HepG2 (cell line): ENCODE measurements at regions of chr13 and their contacts with region 1.

Region 1: DNA sequence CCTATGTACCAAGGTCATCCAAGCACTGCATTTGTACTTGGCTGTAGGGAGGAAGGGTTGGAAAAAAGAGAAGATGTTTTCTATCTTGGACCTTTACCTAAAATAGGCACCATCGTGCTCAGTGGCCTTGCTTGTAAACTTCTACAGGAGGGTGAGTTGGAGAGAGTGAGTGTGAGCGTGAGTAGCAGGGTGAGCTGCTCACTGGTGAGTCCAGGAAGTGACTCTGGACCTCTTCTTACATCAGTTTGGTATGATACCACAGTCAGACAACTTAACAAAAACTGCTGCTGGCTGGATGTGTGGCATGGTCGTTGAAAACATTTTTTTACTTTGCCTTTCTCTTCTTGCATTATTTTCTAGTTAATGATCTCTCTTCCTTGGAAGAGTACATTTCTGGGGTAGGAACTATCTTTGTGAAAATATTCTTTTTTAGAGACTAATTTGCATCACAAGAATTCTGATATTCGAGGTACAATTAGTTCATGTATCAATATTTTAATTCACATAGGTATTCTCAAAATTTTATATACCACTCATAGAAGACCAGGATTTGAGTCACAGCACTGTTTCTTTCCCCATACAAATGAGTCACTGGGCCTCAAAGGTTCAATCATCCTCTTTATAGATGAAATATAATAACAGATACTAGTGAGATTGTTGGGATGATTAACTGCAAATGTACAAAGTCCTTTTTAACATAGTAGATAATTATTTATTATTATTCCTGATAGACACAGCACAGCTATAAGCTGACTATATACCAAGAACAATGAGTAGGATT is 651 bp downstream of the SERPINE3 start:
- DNase-seq: no peak
- ATAC-seq: no peak
- H3K4me3 ChIP-seq: no peak overlapping the region
- H3K27ac ChIP-seq: no peak overlapping the region
- H3K4me1 ChIP-seq: peaks cover 8% of the 10 kb centered on the region; the same call in 1 of the 2 replicates
- H3K27me3 ChIP-seq: no peaks in the 10 kb centered on the region
- CTCF ChIP-seq: no peak
- EP300 ChIP-seq: no peak
- POLR2A ChIP-seq: no peak
- RAD21 ChIP-seq: no peak

Region 2: GRCh38 chr13:51303882-51304281 is 36.3 kb before region 1 on chr13:
- CTCF ChIA-PET with region 1: no interaction called
- POLR2A ChIA-PET with region 1: no interaction called
- in situ Hi-C with region 1: no loop called
- intact Hi-C with region 1: loop called (anchors 1 kb)
- DNase-seq: no peak
- ATAC-seq: no peak
- H3K4me3 ChIP-seq: no peak overlapping the region
- H3K27ac ChIP-seq: no peak overlapping the region
- H3K4me1 ChIP-seq: no peaks in the 10 kb centered on the region
- H3K27me3 ChIP-seq: peaks cover 0 to 18% of the 10 kb centered on the region in 2 experiments; a peak in 2 of 5 replicates
- CTCF ChIP-seq: no peak
- EP300 ChIP-seq: no peak
- POLR2A ChIP-seq: no peak
- RAD21 ChIP-seq: no peak

Region 3: DNA sequence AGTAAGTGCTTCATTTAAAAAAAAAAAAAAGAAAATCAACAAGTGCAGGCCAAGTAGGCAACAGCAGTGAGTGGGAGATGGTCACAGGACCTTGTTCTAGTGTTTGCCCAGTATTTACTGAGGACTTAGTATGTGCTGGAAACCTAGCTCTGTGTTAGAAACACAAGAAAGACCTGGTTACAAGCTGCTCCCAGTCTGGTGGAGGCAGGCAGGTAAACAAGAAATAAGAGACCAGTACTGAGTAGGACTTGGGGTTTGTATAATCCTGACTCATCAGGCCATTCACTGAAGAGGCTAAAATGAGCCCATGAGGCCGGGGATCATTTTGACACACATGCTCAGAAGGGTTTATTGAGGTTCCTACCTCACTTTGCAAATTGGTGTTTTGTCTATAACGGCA is 22.1 kb before region 1 on chr13:
- CTCF ChIA-PET with region 1: no interaction called
- POLR2A ChIA-PET with region 1: no interaction called
- in situ Hi-C with region 1: no loop called
- intact Hi-C with region 1: loop called (anchors 2 kb)
- DNase-seq: no peak
- ATAC-seq: no peak
- H3K4me3 ChIP-seq: no peak overlapping the region
- H3K27ac ChIP-seq: no peak overlapping the region
- H3K4me1 ChIP-seq: no peaks in the 10 kb centered on the region
- H3K27me3 ChIP-seq: peaks cover 2 to 16% of the 10 kb centered on the region in 2 experiments; a peak in 3 of 5 replicates
- CTCF ChIP-seq: no peak
- EP300 ChIP-seq: no peak
- POLR2A ChIP-seq: no peak
- RAD21 ChIP-seq: no peak